ENCODE measurements at regions of chr14 and their contacts with region 1.

Region 1: GRCh38 chr14:36320200-36320896 is at the start of gene MBIP:
- DNase-seq: peak; percentile 100
- ATAC-seq: peak; percentile 98
- H3K4me3 ChIP-seq: peak within 1 kb of the TSS; percentile 95 to 96 (median 96)
- H3K27ac ChIP-seq: peak within 1 kb of the TSS; percentile 82
- H3K4me1 ChIP-seq: peaks cover 24% of the 10 kb centered on the region
- H3K27me3 ChIP-seq: peaks cover 0 to 16% of the 10 kb centered on the region in 2 experiments; a peak in 1 of 5 replicates
- CTCF ChIP-seq: peak; percentile 11; the same call in 1 of the 2 replicates
- EP300 ChIP-seq: no peak
- POLR2A ChIP-seq: peak; percentile 93 to 94
- RAD21 ChIP-seq: peak; percentile 37; the same call in 1 of the 2 replicates
- total RNA-seq, gene MBIP: 48.6 and 57.3 TPM in 2 replicates

Region 2: DNA sequence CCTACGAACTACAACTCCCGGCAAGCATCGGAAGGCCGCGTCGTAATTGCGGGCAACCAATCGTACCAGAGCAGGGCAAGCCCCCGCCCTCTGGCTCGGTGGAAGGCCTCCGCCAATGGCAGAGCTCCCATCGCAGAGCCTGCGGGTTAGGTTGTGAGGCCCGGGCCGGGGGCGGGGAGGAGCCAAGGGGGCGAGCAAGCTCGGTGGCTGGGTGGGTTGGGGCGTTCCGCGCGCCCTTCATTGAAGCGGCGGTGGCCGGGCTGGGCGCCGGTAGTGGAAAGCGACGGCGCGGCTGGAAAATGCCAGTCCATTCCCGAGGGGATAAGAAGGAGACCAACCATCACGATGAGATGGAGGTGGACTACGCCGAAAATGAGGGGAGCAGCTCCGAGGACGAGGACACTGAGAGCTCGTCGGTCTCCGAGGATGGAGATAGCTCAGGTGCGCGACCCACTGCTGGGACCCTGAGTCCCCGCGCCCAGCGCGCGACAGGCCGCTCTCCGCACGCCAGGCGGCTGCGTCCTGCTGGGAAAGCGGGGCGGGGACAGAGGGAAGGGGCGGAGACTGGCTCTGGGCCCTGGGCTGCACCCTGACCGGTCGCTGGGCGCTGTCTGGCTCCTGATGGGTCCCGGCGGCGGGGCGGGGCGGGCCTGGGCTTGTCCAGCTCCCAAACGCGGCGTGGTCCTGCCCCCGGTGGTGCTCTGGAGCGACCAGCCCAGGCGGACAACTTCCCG is 494.0 kb before region 1 on chr14 and contains the start of gene BRMS1L:
- CTCF ChIA-PET with region 1: no interaction called
- POLR2A ChIA-PET with region 1: interaction called, 13 read pairs
- in situ Hi-C with region 1: no loop called
- intact Hi-C with region 1: loop called (anchors 1 kb)
- DNase-seq: peak; percentile 100
- ATAC-seq: peak; percentile 96
- H3K4me3 ChIP-seq: peak within 1 kb of the TSS; percentile 78 to 99 (median 95)
- H3K27ac ChIP-seq: peak within 1 kb of the TSS; percentile 95
- H3K4me1 ChIP-seq: peaks cover 45% of the 10 kb centered on the region
- H3K27me3 ChIP-seq: no peaks in the 10 kb centered on the region; a peak in 1 of 5 replicates
- CTCF ChIP-seq: peak; percentile 51
- EP300 ChIP-seq: peak in 1 of 2 experiments; percentile 50; a peak in 2 of 4 replicates
- POLR2A ChIP-seq: peak in 1 of 2 experiments; percentile 100; a peak in 2 of 4 replicates
- RAD21 ChIP-seq: peak; percentile 72; the same call in 1 of the 2 replicates
- total RNA-seq, gene BRMS1L: 23.8 and 35.5 TPM in 2 replicates

Region 3: DNA sequence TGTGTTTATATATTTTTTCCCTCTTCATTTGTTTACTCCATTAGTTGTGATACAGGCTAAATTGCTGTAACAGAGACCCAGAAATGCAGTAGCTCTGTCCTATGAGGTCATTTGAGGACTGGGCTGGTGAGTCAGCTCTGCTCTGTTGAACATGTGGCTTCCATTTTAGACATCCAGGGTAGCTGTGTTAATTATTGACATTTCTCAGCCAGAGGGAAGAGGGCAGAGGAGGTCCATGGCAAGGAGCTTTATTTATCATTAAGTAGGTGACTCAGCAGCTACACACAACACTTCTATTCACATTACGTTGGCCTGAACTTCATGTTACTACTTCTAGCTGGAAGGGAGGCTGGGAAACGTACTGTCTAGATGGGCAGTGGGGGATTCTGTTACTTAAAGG is 229.3 kb before region 1 on chr14:
- CTCF ChIA-PET with region 1: no interaction called
- POLR2A ChIA-PET with region 1: interaction called, 21 read pairs
- in situ Hi-C with region 1: no loop called
- intact Hi-C with region 1: loop called (anchors 1 kb)
- DNase-seq: peak; percentile 98
- ATAC-seq: peak; percentile 100
- H3K4me3 ChIP-seq: no peak overlapping the region; a peak in 1 of 6 replicates
- H3K27ac ChIP-seq: no peak overlapping the region
- H3K4me1 ChIP-seq: peaks cover 16% of the 10 kb centered on the region
- H3K27me3 ChIP-seq: no peaks in the 10 kb centered on the region
- CTCF ChIP-seq: peak; percentile 57
- EP300 ChIP-seq: peak in 1 of 2 experiments; percentile 81; a peak in 1 of 4 replicates
- POLR2A ChIP-seq: no peak
- RAD21 ChIP-seq: no peak

Region 4: DNA sequence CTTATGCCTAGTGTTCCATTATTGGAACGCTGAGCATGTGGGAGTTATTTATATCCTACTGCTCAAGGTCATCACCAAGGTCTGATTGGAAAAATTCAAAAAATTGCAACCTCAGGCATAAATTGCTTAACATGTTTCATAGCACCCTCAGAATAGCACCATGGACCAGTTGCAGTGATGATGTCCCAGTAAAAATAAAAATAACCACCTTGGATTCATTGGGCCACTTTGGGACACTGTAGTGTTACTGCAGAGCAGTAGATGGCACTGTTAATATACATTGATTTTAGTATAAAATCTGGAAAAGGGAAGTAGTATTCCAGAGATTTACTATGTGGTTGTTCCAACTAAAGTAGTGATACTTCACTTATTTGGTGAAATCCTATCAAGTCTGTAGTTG is 112.8 kb before region 1 on chr14:
- CTCF ChIA-PET with region 1: no interaction called
- POLR2A ChIA-PET with region 1: no interaction called
- in situ Hi-C with region 1: no loop called
- intact Hi-C with region 1: loop called (anchors 1 kb)
- DNase-seq: peak; percentile 35
- ATAC-seq: peak; percentile 70
- H3K4me3 ChIP-seq: no peak overlapping the region
- H3K27ac ChIP-seq: no peak overlapping the region
- H3K4me1 ChIP-seq: no peaks in the 10 kb centered on the region
- H3K27me3 ChIP-seq: peaks cover 2 to 37% of the 10 kb centered on the region in 2 experiments
- CTCF ChIP-seq: peak; percentile 53
- EP300 ChIP-seq: no peak
- POLR2A ChIP-seq: no peak
- RAD21 ChIP-seq: no peak

Region 5: GRCh38 chr14:36238666-36239363 is 81.5 kb before region 1 on chr14:
- CTCF ChIA-PET with region 1: no interaction called
- POLR2A ChIA-PET with region 1: no interaction called
- in situ Hi-C with region 1: no loop called
- intact Hi-C with region 1: no loop called
- DNase-seq: no peak
- ATAC-seq: peak; percentile 39; the same call in 2 of the 3 replicates
- H3K4me3 ChIP-seq: no peak overlapping the region
- H3K27ac ChIP-seq: no peak overlapping the region
- H3K4me1 ChIP-seq: peaks cover 7% of the 10 kb centered on the region; the same call in 1 of the 2 replicates
- H3K27me3 ChIP-seq: peaks cover 0 to 22% of the 10 kb centered on the region in 2 experiments; a peak in 3 of 5 replicates
- CTCF ChIP-seq: no peak
- EP300 ChIP-seq: no peak
- POLR2A ChIP-seq: no peak
- RAD21 ChIP-seq: no peak

Region 6: GRCh38 chr14:36293824-36294223 is 26.5 kb before region 1 on chr14:
- CTCF ChIA-PET with region 1: no interaction called
- POLR2A ChIA-PET with region 1: interaction called, 16 read pairs
- in situ Hi-C with region 1: no loop called
- intact Hi-C with region 1: no loop called
- DNase-seq: peak; percentile 30
- ATAC-seq: no peak; the same call in 2 of the 3 replicates
- H3K4me3 ChIP-seq: no peak overlapping the region
- H3K27ac ChIP-seq: no peak overlapping the region
- H3K4me1 ChIP-seq: no peaks in the 10 kb centered on the region
- H3K27me3 ChIP-seq: no peaks in the 10 kb centered on the region
- CTCF ChIP-seq: no peak
- EP300 ChIP-seq: no peak
- POLR2A ChIP-seq: no peak
- RAD21 ChIP-seq: no peak

Region 7: DNA sequence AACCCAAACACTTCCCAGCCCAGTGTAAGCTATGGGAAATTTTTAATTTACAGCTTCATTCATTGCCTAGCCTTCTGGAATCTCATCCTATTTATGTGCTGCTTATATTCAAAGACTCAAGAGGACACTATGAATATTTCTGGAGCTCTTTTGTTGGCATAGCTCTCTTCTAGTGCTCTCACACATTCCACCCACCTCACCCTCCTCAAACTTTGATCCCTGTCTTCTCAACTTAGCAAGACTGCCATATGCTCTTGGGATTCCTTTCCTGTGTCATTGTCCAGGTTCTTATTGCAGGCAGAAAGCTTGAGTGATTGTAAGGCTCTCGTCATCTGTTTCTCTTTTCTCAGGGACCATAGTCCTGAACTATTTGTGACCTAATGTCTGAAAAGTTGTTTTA is 217.7 kb after region 1 on chr14:
- CTCF ChIA-PET with region 1: no interaction called
- POLR2A ChIA-PET with region 1: no interaction called
- in situ Hi-C with region 1: no loop called
- intact Hi-C with region 1: no loop called
- DNase-seq: no peak
- ATAC-seq: no peak
- H3K4me3 ChIP-seq: no peak overlapping the region
- H3K27ac ChIP-seq: no peak overlapping the region
- H3K4me1 ChIP-seq: no peaks in the 10 kb centered on the region
- H3K27me3 ChIP-seq: peaks cover 0 to 5% of the 10 kb centered on the region in 2 experiments; a peak in 1 of 5 replicates
- CTCF ChIP-seq: no peak
- EP300 ChIP-seq: no peak
- POLR2A ChIP-seq: no peak
- RAD21 ChIP-seq: no peak

Measured in HepG2 (cell line).